Activated naive CD4-positive, alpha-beta T cell treated with anti-CD3 and anti-CD28 coated beads, Interleukin-2, amount 10 ng/mL, durations not matched to agents 7 days and 5 days (primary cell): ENCODE measurements at regions of chr17 and their contacts with region 1.

Region 1: GRCh38 chr17:30124273-30124796 is 7.7 kb downstream of the NSRP1 start:
- DNase-seq: no peak
- H3K4me3 Mint-ChIP-seq: no peak overlapping the region
- H3K27ac Mint-ChIP-seq: no peak overlapping the region
- H3K4me1 Mint-ChIP-seq: peaks cover 33% of the 10 kb centered on the region
- H3K27me3 Mint-ChIP-seq: no peaks in the 10 kb centered on the region

Region 2: DNA sequence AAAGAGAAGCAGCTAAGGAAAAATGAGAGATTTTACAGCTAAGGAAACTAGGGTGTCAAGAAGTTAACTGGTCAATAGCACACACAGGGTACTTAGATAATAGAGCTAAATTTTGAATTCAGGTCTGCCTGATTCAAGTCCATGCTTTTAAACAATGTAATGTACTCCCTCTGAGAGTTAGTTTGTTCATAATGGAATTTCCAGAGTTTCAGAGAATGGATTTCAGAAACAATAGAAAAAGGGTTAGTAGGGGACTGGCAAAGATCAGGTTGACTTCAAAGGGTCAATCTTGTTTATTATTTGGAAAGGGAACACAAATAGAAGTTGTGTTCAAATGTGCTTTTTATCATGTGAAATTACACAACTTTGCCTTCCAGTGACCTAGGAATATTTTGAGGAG is 10.2 kb after region 1 on chr17:
- CTCF ChIA-PET with region 1: interaction called, 10 read pairs
- DNase-seq: no peak
- H3K4me3 Mint-ChIP-seq: no peak overlapping the region
- H3K27ac Mint-ChIP-seq: no peak overlapping the region
- H3K4me1 Mint-ChIP-seq: peaks cover 2% of the 10 kb centered on the region
- H3K27me3 Mint-ChIP-seq: no peaks in the 10 kb centered on the region

Region 3: DNA sequence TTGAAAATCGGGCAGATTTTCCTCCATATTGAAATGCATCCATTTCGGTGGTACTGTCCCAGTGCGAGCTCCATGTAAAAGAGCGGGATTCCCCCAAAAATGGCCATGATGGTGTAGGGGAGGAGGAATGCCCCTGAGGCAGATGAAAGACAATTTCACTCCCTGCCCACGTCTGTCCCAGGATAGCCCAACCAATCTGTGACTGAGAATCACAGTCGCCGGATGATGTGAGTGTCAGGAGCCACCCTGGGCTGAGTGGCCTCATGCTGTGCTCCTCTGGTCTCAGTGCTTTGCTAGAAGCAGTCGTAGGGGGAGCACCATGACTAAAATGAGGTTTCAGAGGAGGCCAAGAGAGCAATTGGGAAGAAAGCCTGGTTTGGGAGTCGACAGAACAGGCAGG is 94.5 kb after region 1 on chr17:
- CTCF ChIA-PET with region 1: no interaction called
- DNase-seq: no peak
- H3K4me3 Mint-ChIP-seq: no peak overlapping the region
- H3K27ac Mint-ChIP-seq: no peak overlapping the region
- H3K4me1 Mint-ChIP-seq: no peaks in the 10 kb centered on the region
- H3K27me3 Mint-ChIP-seq: peaks cover 22% of the 10 kb centered on the region

Region 4: DNA sequence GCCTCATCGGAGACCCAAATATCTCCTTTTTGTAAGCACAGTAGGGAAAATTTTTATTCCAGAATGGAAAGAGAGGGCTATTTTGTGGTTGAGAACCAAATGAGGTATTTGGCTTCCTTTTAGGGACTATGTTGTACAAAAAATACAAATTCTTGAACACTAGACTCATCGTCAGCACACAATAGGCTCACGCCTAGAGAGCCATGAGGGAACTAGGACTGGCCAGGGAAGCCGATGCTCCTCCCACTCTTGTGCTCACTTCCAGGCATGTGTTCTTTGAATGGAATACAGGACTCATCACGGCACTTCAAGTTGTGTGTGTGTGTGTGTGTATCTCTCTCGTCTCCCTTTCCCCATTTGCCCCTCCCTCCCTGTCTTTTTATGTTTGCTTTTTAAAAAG is 185.3 kb after region 1 on chr17:
- CTCF ChIA-PET with region 1: no interaction called
- DNase-seq: no peak
- H3K4me3 Mint-ChIP-seq: no peak overlapping the region
- H3K27ac Mint-ChIP-seq: no peak overlapping the region
- H3K4me1 Mint-ChIP-seq: no peaks in the 10 kb centered on the region
- H3K27me3 Mint-ChIP-seq: peaks cover 12% of the 10 kb centered on the region